IMR-90 (cell line): ENCODE measurements at regions of chr2 and their contacts with region 1.

Region 1: GRCh38 chr2:232444409-232445148 is 11.4 kb upstream of the ALPI start:
- DNase-seq: peak; percentile 50
- ATAC-seq: peak; percentile 61
- H3K4me3 ChIP-seq: no peak overlapping the region
- H3K27ac ChIP-seq: no peak overlapping the region
- H3K4me1 ChIP-seq: no peaks in the 10 kb centered on the region
- H3K27me3 ChIP-seq: peaks cover 6% of the 10 kb centered on the region; the same call in 1 of the 2 replicates
- CTCF ChIP-seq: peak; percentile 57
- POLR2A ChIP-seq: no peak
- RAD21 ChIP-seq: no peak; the same call in 1 of the 2 replicates

Region 2: DNA sequence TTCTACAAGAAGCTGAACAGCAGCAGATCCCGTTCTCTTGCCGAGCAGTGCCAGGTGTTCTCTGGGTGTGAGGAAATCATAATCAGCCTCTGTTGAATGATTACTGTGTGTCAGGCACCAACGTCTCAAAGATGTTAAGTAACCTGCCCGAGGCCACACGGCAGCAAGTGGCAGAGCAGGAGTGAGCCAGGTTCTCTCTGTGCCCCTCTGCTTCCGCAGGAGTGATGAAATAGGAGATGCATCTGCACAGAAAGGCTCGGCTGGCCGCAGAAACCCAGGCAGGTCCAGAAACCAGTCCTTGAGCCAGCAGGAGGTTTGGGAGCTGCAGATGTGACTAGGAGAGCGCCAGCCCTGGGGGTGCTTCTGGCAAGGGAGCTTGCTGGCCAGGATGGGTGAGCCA is 589.9 kb before region 1 on chr2:
- CTCF ChIA-PET with region 1: no interaction called
- POLR2A ChIA-PET with region 1: no interaction called
- dilution Hi-C with region 1: no loop called
- in situ Hi-C with region 1: no loop called
- intact Hi-C with region 1: loop called (anchors 1 kb)
- DNase-seq: no peak
- ATAC-seq: no peak
- H3K4me3 ChIP-seq: no peak overlapping the region
- H3K27ac ChIP-seq: no peak overlapping the region
- H3K4me1 ChIP-seq: no peaks in the 10 kb centered on the region
- H3K27me3 ChIP-seq: peaks cover 15% of the 10 kb centered on the region
- CTCF ChIP-seq: no peak
- POLR2A ChIP-seq: no peak
- RAD21 ChIP-seq: no peak

Region 3: GRCh38 chr2:231900486-231900942 is 544.1 kb before region 1 on chr2:
- CTCF ChIA-PET with region 1: interaction called, 4 read pairs
- POLR2A ChIA-PET with region 1: no interaction called
- dilution Hi-C with region 1: no loop called
- in situ Hi-C with region 1: no loop called
- intact Hi-C with region 1: loop called (anchors 1 kb)
- DNase-seq: peak; percentile 55
- ATAC-seq: peak; percentile 100
- H3K4me3 ChIP-seq: no peak overlapping the region
- H3K27ac ChIP-seq: no peak overlapping the region
- H3K4me1 ChIP-seq: no peaks in the 10 kb centered on the region
- H3K27me3 ChIP-seq: peaks cover 16% of the 10 kb centered on the region; the same call in 1 of the 2 replicates
- CTCF ChIP-seq: peak; percentile 79
- POLR2A ChIP-seq: no peak
- RAD21 ChIP-seq: peak; percentile 57

Region 4: GRCh38 chr2:231925303-231926179 is 519.0 kb before region 1 on chr2:
- CTCF ChIA-PET with region 1: no interaction called
- POLR2A ChIA-PET with region 1: no interaction called
- dilution Hi-C with region 1: no loop called
- in situ Hi-C with region 1: no loop called
- intact Hi-C with region 1: loop called (anchors 1 kb)
- DNase-seq: peak; percentile 83
- ATAC-seq: peak; percentile 88
- H3K4me3 ChIP-seq: peak overlapping the region; percentile 41
- H3K27ac ChIP-seq: no peak overlapping the region
- H3K4me1 ChIP-seq: peaks cover 5% of the 10 kb centered on the region
- H3K27me3 ChIP-seq: peaks cover 69% of the 10 kb centered on the region
- CTCF ChIP-seq: peak; percentile 92
- POLR2A ChIP-seq: no peak
- RAD21 ChIP-seq: peak; percentile 86

Region 5: GRCh38 chr2:232142049-232142448 is 302.5 kb before region 1 on chr2:
- CTCF ChIA-PET with region 1: no interaction called
- POLR2A ChIA-PET with region 1: no interaction called
- dilution Hi-C with region 1: no loop called
- in situ Hi-C with region 1: no loop called
- intact Hi-C with region 1: loop called (anchors 5 kb)
- DNase-seq: peak; percentile 31
- ATAC-seq: 0 out of 2 replicates have a peak, but pooled peaks have one; percentile 38
- H3K4me3 ChIP-seq: no peak overlapping the region
- H3K27ac ChIP-seq: no peak overlapping the region
- H3K4me1 ChIP-seq: peaks cover 6% of the 10 kb centered on the region
- H3K27me3 ChIP-seq: no peaks in the 10 kb centered on the region
- CTCF ChIP-seq: peak; percentile 59
- POLR2A ChIP-seq: no peak
- RAD21 ChIP-seq: peak; percentile 68

Region 6: DNA sequence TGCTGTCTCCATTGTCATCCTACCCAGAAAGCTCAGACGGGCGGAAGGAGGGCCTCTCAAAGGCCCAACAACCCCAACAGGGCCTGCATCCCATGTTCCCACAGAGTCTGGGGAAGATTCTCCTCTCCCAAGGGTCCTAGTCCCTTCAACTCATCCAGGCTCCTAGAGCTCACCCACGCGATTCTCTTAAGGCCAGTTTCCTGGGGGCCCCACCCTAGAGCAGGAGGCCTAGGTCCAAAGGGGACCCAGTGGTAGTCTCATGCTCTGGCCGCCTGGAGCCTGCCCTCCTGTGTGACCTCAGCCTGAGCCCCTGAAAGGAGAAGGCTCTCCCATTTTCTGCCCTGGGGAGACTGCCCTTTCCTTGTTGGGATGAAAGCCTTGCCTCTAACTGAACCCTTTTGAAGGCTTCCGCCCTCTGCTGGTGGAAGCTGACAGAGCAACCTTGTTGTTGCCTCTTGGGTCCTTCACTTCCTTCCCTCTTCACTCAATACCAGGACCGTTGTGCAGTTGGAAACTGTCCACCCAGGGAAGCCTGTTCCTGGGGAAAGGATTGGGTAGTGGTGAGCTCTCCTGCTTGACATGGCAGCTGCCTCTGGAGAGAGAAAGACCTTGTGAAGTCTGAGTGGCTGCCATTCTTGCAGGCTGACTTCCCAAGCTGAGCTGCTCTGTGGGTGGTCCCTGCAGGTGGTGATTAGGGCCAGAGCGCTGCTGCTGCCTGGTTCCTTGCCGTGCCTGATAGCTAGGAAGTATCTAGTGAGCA is 152.0 kb before region 1 on chr2:
- CTCF ChIA-PET with region 1: no interaction called
- POLR2A ChIA-PET with region 1: no interaction called
- dilution Hi-C with region 1: no loop called
- in situ Hi-C with region 1: no loop called
- intact Hi-C with region 1: no loop called
- DNase-seq: peak; percentile 51
- ATAC-seq: peak; percentile 71
- H3K4me3 ChIP-seq: no peak overlapping the region
- H3K27ac ChIP-seq: no peak overlapping the region
- H3K4me1 ChIP-seq: peaks cover 1% of the 10 kb centered on the region; the same call in 1 of the 2 replicates
- H3K27me3 ChIP-seq: no peaks in the 10 kb centered on the region
- CTCF ChIP-seq: peak; percentile 63
- POLR2A ChIP-seq: no peak
- RAD21 ChIP-seq: peak; percentile 69

Region 7: DNA sequence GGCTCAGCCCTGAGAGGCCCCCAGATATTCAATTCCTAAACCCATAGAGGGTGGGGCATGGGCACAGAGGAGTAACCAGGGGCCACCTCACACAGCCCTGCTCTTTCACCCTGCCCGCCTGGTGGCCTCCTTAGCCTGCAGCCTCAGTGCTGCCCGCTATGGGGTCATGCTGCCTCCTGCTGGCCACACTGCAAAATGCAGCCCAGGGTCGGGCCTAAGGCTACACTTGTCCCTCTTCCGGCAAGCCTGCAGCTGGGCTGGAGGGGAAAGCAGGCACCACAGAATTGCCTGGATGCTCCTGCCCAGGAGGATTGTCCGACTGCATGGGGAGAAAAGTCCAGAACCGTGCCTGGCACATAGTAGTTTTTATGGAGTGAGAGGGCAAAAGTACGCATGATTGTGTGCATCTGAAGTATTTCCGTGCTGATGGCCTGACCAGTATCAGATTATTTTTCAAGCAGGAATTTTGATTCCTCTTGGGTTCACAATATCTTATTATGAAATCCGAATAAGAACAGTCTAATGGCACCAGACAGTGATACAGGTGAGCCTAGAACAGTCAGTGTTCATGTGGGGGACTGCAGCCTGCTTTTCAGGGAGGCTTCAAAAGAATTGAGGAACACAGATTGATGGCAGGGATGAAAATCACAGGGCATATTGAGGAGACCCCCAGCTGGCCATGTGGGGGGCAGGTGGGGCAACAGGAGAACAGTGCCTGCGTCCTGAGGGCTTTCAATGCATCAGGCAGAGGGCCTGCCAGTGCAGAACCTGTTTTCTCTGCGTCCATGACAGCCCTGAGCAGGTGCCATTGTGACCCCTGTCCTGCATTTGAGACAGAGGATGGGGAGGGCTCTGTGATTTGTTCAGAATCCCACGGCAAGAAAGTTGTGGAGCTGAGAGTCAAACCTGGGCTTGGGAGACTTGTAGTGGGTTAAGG is 117.2 kb before region 1 on chr2:
- CTCF ChIA-PET with region 1: no interaction called
- POLR2A ChIA-PET with region 1: no interaction called
- dilution Hi-C with region 1: no loop called
- in situ Hi-C with region 1: no loop called
- intact Hi-C with region 1: loop called (anchors 5 kb)
- DNase-seq: peak; percentile 50
- ATAC-seq: peak; percentile 90
- H3K4me3 ChIP-seq: no peak overlapping the region
- H3K27ac ChIP-seq: no peak overlapping the region
- H3K4me1 ChIP-seq: no peaks in the 10 kb centered on the region
- H3K27me3 ChIP-seq: no peaks in the 10 kb centered on the region
- CTCF ChIP-seq: peak; percentile 72
- POLR2A ChIP-seq: no peak
- RAD21 ChIP-seq: peak; percentile 72

Region 8: DNA sequence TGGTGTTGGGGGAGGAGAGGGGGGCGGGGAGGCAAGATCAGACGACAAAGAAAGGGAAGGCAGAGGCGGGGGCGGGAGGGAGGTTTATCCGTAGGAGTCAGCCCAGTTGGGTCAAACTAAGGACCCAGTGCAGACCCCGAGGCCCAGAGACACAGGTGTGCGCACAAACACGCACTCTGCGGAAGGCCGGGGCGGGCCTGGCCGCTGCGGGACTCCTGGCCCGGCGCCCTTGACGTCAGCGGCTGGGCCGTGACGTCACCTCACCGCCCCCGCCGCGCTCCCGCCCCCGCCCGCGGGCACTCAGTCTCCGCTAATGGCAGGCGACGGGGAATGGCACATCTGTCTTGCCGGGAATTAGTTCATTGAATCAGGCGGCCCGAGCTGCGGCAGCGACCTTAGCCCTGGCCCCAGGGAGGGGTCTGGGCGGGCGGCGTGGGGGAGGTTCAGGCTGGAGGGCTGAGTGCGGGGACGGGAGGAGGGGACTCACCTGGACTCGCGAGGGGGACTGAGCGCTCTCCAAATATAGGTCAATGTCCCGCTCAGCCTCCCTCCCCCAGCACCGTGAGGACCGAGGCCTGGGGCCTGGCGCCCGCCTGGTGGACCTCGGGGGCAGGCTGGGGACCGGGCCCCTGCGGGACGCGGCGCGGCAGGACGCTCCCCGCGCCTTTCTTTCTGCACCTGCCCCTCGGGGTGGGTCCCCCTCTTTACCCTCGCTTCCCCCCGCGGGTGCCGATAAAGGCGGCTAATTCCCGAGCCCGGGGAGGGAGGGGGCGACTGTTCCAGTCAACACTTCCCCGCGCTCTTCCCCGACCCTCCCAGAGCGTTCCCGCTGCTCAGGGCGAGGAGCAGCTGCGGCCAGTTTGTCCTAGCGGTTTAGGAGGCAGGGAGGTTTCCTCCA is 58.6 kb after region 1 on chr2:
- CTCF ChIA-PET with region 1: no interaction called
- POLR2A ChIA-PET with region 1: no interaction called
- dilution Hi-C with region 1: no loop called
- in situ Hi-C with region 1: no loop called
- intact Hi-C with region 1: no loop called
- DNase-seq: peak; percentile 45
- ATAC-seq: peak; percentile 41
- H3K4me3 ChIP-seq: no peak overlapping the region; the same call in 1 of the 2 replicates
- H3K27ac ChIP-seq: no peak overlapping the region
- H3K4me1 ChIP-seq: no peaks in the 10 kb centered on the region
- H3K27me3 ChIP-seq: peaks cover 73% of the 10 kb centered on the region
- CTCF ChIP-seq: no peak
- POLR2A ChIP-seq: no peak
- RAD21 ChIP-seq: no peak

Region 9: GRCh38 chr2:232521959-232522622 is 77.5 kb after region 1 on chr2:
- CTCF ChIA-PET with region 1: interaction called, 4 read pairs
- POLR2A ChIA-PET with region 1: no interaction called
- dilution Hi-C with region 1: no loop called
- in situ Hi-C with region 1: no loop called
- intact Hi-C with region 1: loop called (anchors 1 kb)
- DNase-seq: no peak
- ATAC-seq: peak; percentile 75
- H3K4me3 ChIP-seq: no peak overlapping the region
- H3K27ac ChIP-seq: no peak overlapping the region
- H3K4me1 ChIP-seq: no peaks in the 10 kb centered on the region
- H3K27me3 ChIP-seq: peaks cover 73% of the 10 kb centered on the region
- CTCF ChIP-seq: peak; percentile 70
- POLR2A ChIP-seq: no peak
- RAD21 ChIP-seq: peak; percentile 72